Activated B cell treated with CpG ODN at 0.5 μM for 24 hours (primary cell): ENCODE measurements at regions of chr17 and their contacts with region 1.

Region 1: DNA sequence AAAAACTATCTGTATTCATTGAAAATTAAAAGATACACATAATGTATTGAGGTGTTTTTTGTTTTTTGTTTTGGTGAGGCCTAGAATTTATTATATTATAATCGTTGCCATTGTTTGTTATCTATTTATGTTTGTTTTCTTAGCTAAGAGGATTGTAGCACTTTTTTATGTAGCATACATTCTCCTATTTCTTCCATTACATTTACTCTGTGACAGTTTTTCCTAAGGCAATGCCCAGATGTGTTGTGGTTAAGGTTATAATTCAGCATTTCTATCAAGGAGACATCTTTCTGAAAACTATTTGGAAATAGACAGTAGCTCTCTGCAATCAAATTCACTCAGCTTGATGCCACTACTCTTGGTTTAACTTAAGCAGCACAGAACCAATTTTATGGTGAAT is 161.6 kb downstream of the PPM1E start:
- DNase-seq: no peak
- ATAC-seq: no peak
- H3K4me3 Mint-ChIP-seq: no peak overlapping the region
- H3K27ac Mint-ChIP-seq: no peak overlapping the region
- H3K4me1 Mint-ChIP-seq: peaks cover 9% of the 10 kb centered on the region
- H3K27me3 Mint-ChIP-seq: no peaks in the 10 kb centered on the region
- CTCF ChIP-seq: no peak

Region 2: GRCh38 chr17:58870753-58871152 is 46.5 kb before region 1 on chr17:
- CTCF ChIA-PET with region 1: no interaction called
- POLR2A ChIA-PET with region 1: no interaction called
- intact Hi-C with region 1: no loop called
- DNase-seq: no peak
- ATAC-seq: no peak
- H3K4me3 Mint-ChIP-seq: no peak overlapping the region
- H3K27ac Mint-ChIP-seq: no peak overlapping the region
- H3K4me1 Mint-ChIP-seq: peaks cover 5% of the 10 kb centered on the region
- H3K27me3 Mint-ChIP-seq: no peaks in the 10 kb centered on the region
- CTCF ChIP-seq: no peak

Region 3: DNA sequence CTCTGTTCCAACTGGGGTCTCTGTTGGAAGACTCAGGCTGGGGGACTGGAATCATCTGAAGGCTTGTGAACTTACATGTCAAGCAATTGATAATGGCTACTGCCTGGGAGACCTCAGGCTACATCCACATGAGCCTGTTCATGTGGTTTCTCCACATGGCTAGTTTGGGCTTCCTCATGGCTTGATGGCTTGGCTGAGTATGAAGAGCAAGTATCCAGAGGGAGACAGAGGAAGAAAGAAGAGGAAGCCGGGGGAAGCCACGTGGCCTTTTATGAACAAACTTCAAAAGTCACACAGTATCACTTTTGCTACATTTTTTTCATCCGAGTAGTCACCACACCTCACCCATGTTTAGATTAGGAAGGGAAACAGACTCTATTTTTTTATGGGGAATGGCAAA is 30.6 kb after region 1 on chr17:
- CTCF ChIA-PET with region 1: no interaction called
- POLR2A ChIA-PET with region 1: interaction called, 20 read pairs
- intact Hi-C with region 1: no loop called
- DNase-seq: no peak
- ATAC-seq: no peak
- H3K4me3 Mint-ChIP-seq: no peak overlapping the region
- H3K27ac Mint-ChIP-seq: no peak overlapping the region
- H3K4me1 Mint-ChIP-seq: peaks cover 8% of the 10 kb centered on the region
- H3K27me3 Mint-ChIP-seq: no peaks in the 10 kb centered on the region
- CTCF ChIP-seq: no peak